Panc1 (cell line): ENCODE measurements at regions of chr17 and their contacts with region 1.

Region 1: GRCh38 chr17:73616120-73616872 is 27.9 kb downstream of the SDK2 start:
- DNase-seq: no peak
- ATAC-seq: no peak
- H3K4me3 ChIP-seq: no peak overlapping the region
- H3K27ac ChIP-seq: no peak overlapping the region
- H3K4me1 ChIP-seq: no peaks in the 10 kb centered on the region
- H3K27me3 ChIP-seq: no peaks in the 10 kb centered on the region
- CTCF ChIP-seq: no peak

Region 2: GRCh38 chr17:73203788-73204479 is 412.4 kb before region 1 on chr17:
- CTCF ChIA-PET with region 1: no interaction called
- POLR2A ChIA-PET with region 1: interaction called, 14 read pairs
- in situ Hi-C with region 1: no loop called
- intact Hi-C with region 1: no loop called
- DNase-seq: no peak
- ATAC-seq: 0 out of 2 replicates have a peak, but pooled peaks have one; percentile 17
- H3K4me3 ChIP-seq: no peak overlapping the region
- H3K27ac ChIP-seq: 0 out of 2 replicates have a peak overlapping the region, but pooled peaks have one; percentile 2
- H3K4me1 ChIP-seq: peaks cover 8% of the 10 kb centered on the region; the same call in 1 of the 2 replicates
- H3K27me3 ChIP-seq: no peaks in the 10 kb centered on the region
- CTCF ChIP-seq: no peak

Region 3: GRCh38 chr17:73492821-73493814 is 123.2 kb before region 1 on chr17:
- CTCF ChIA-PET with region 1: no interaction called
- POLR2A ChIA-PET with region 1: no interaction called
- in situ Hi-C with region 1: no loop called
- intact Hi-C with region 1: no loop called
- DNase-seq: no peak
- ATAC-seq: no peak
- H3K4me3 ChIP-seq: no peak overlapping the region
- H3K27ac ChIP-seq: no peak overlapping the region
- H3K4me1 ChIP-seq: no peaks in the 10 kb centered on the region
- H3K27me3 ChIP-seq: peaks cover 28% of the 10 kb centered on the region; the same call in 1 of the 2 replicates
- CTCF ChIP-seq: no peak

Region 4: DNA sequence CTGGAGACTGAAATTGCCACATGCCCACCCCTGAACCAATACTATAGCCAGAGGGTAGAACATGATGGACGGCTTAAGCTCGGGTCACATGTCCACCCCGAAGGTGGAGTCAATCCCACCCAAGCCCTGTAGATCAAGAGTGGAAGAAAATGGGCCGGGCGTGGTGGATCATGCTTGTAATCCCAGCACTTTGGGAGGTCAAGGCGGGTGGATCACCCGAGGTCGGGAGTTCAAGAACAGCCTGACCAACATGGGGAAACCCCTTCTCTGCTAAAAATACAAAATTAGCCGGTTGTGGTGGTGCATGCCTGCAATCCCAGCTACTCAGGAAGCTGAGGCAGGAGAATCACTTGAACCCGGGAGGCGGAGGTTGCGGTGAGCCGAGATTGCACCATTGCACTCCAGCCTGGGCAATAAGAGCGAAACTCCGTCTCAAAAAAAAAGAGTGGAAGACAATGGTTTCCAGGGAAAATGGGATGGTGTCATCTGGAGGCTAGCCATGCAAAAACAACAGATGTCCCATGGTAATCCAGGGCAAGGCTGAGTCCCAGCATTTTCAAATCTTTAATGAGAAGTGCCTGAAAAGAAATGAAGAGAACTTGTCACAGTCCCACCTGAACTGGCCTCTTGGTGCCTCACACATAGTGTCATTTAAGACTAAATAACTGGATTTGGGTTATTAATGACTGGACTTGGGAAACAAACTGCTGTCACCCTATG is 1066.3 kb after region 1 on chr17:
- CTCF ChIA-PET with region 1: no interaction called
- POLR2A ChIA-PET with region 1: interaction called, 10 read pairs
- in situ Hi-C with region 1: no loop called
- intact Hi-C with region 1: no loop called
- DNase-seq: no peak
- ATAC-seq: no peak
- H3K4me3 ChIP-seq: no peak overlapping the region
- H3K27ac ChIP-seq: no peak overlapping the region
- H3K4me1 ChIP-seq: no peaks in the 10 kb centered on the region
- H3K27me3 ChIP-seq: peaks cover 7% of the 10 kb centered on the region
- CTCF ChIP-seq: no peak